Natural killer cell (primary cell): ENCODE measurements at regions of chr6 and their contacts with region 1.

Region 1: GRCh38 chr6:11496152-11497060 is 41.1 kb upstream of the TMEM170B start:
- DNase-seq: peak; percentile 48 to 90
- ATAC-seq: peak; percentile 95 to 99 (median 99)
- H3K4me3 ChIP-seq: no peak overlapping the region
- H3K4me3 Mint-ChIP-seq: no peak overlapping the region
- H3K27ac ChIP-seq: peak overlapping the region; percentile 2
- H3K27ac Mint-ChIP-seq: no peak overlapping the region
- H3K4me1 ChIP-seq: peaks cover 3% of the 10 kb centered on the region
- H3K4me1 Mint-ChIP-seq: no peaks in the 10 kb centered on the region
- H3K27me3 ChIP-seq: no peaks in the 10 kb centered on the region
- H3K27me3 Mint-ChIP-seq: no peaks in the 10 kb centered on the region
- CTCF ChIP-seq: peak; percentile 93

Region 2: DNA sequence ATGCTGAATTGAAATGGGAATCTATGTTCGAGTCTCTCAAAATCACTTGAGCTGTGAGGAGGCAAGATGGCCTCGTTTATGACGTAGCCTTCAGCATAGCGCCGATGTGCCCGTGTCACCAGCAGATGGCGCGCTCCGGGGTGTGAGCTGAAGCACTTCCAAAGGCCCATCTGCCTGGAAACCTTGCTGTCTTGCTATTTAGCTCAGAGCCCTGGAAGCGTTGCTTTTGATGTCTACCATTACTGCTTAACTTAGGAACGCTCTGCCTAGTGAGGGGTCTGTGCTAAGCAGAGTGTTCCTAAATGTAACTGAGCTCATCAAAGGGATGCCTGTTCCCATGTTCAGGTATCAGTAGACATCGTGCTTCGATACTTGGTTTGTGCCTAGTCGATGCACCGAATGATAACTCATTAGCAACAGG is 541.8 kb before region 1 on chr6:
- intact Hi-C with region 1: loop called (anchors 10 kb)
- DNase-seq: peak; percentile 44 to 66
- ATAC-seq: peak; percentile 52 to 75 (median 62)
- H3K4me3 ChIP-seq: no peak overlapping the region
- H3K4me3 Mint-ChIP-seq: no peak overlapping the region
- H3K27ac ChIP-seq: no peak overlapping the region
- H3K27ac Mint-ChIP-seq: no peak overlapping the region
- H3K4me1 ChIP-seq: no peaks in the 10 kb centered on the region
- H3K4me1 Mint-ChIP-seq: no peaks in the 10 kb centered on the region
- H3K27me3 ChIP-seq: peaks cover 3% of the 10 kb centered on the region
- H3K27me3 Mint-ChIP-seq: peaks cover 16 to 17% of the 10 kb centered on the region in 2 donors
- CTCF ChIP-seq: peak; percentile 44

Region 3: DNA sequence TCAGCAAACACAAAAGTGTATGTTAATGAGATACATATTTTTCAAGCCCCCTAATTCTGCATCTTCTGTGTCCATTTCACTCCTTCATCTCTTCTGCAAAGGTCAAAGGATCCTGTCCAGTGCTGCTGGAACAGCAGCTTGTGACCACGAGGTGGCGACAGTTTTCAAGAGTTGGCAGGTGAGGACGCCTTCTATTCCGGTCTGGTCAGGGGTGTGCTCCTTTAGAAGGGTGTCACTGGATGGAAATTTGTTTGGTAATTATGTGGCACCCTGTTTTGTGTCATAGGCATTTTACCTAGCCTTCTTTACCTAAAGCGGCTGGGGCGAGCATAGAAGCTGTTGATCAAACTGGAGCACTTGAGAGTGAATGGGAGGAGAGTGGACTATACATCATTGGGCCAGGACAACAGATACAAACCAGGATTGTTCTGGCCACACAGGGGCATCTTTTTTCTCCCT is 352.0 kb before region 1 on chr6:
- intact Hi-C with region 1: loop called (anchors 1 kb)
- DNase-seq: peak; percentile 63 to 86
- ATAC-seq: peak; percentile 82 to 97 (median 96)
- H3K4me3 ChIP-seq: no peak overlapping the region
- H3K4me3 Mint-ChIP-seq: no peak overlapping the region
- H3K27ac ChIP-seq: no peak overlapping the region
- H3K27ac Mint-ChIP-seq: no peak overlapping the region
- H3K4me1 ChIP-seq: peaks cover 3% of the 10 kb centered on the region
- H3K4me1 Mint-ChIP-seq: peaks cover 4 to 5% of the 10 kb centered on the region in 2 donors
- H3K27me3 ChIP-seq: no peaks in the 10 kb centered on the region
- H3K27me3 Mint-ChIP-seq: no peaks in the 10 kb centered on the region
- CTCF ChIP-seq: peak; percentile 86

Region 4: GRCh38 chr6:11172501-11173332 is 323.7 kb before region 1 on chr6:
- intact Hi-C with region 1: loop called (anchors 1 kb)
- DNase-seq: peak; percentile 76 to 86
- ATAC-seq: peak; percentile 75 to 89 (median 83)
- H3K4me3 ChIP-seq: no peak overlapping the region
- H3K4me3 Mint-ChIP-seq: peak overlapping the region; percentile 80
- H3K27ac ChIP-seq: no peak overlapping the region
- H3K27ac Mint-ChIP-seq: peak overlapping the region in 1 of 2 donors; percentile 75
- H3K4me1 ChIP-seq: peaks cover 6% of the 10 kb centered on the region
- H3K4me1 Mint-ChIP-seq: peaks cover 12 to 19% of the 10 kb centered on the region in 2 donors
- H3K27me3 ChIP-seq: no peaks in the 10 kb centered on the region
- H3K27me3 Mint-ChIP-seq: no peaks in the 10 kb centered on the region
- CTCF ChIP-seq: peak; percentile 89

Region 5: DNA sequence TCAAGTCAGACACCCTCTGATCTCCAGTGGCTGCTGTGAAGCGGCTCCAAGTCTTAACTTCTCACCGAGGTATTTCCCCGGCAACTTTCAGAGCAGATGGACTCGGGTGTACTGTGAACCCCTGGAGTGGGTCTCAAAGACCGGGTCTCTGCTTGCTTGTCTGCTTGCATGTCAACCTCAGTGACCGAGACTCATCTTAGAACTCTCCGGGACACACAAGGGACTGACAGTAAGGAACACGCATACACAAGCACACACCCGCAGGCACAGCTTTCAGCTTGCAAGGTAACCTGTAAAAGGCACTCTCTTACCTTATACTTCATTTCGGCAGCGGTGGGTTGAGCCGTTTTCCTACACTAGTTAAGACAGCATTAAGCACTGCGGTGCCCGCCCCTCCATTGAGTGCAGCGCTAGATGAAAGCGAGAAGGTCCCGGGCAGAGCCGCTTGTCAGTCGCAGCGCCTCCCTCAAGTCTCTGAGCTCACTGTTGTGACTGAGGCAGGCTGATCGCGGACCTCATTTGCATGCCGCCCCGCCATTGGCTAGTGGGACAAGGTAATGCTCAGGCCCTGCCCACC is 264.1 kb before region 1 on chr6 and contains the start of gene NEDD9:
- intact Hi-C with region 1: no loop called
- DNase-seq: peak; percentile 93 to 97
- ATAC-seq: peak; percentile 90 to 98 (median 94)
- H3K4me3 ChIP-seq: peak within 1 kb of the TSS; percentile 59
- H3K4me3 Mint-ChIP-seq: peak within 1 kb of the TSS; percentile 94
- H3K27ac ChIP-seq: peak within 1 kb of the TSS; percentile 95
- H3K27ac Mint-ChIP-seq: peak within 1 kb of the TSS; percentile 96 to 98
- H3K4me1 ChIP-seq: peaks cover 40% of the 10 kb centered on the region
- H3K4me1 Mint-ChIP-seq: peaks cover 82 to 88% of the 10 kb centered on the region in 2 donors
- H3K27me3 ChIP-seq: no peaks in the 10 kb centered on the region
- H3K27me3 Mint-ChIP-seq: no peaks in the 10 kb centered on the region
- CTCF ChIP-seq: no peak
- total RNA-seq, gene NEDD9: 106 to 110 (median 107) TPM

Region 6: GRCh38 chr6:11575408-11576033 is 79.1 kb after region 1 on chr6:
- intact Hi-C with region 1: loop called (anchors 1 kb)
- DNase-seq: peak in 1 of 2 donors; percentile 73
- ATAC-seq: peak; percentile 85 to 99 (median 90)
- H3K4me3 ChIP-seq: no peak overlapping the region
- H3K4me3 Mint-ChIP-seq: no peak overlapping the region
- H3K27ac ChIP-seq: no peak overlapping the region
- H3K27ac Mint-ChIP-seq: no peak overlapping the region
- H3K4me1 ChIP-seq: no peaks in the 10 kb centered on the region
- H3K4me1 Mint-ChIP-seq: no peaks in the 10 kb centered on the region
- H3K27me3 ChIP-seq: no peaks in the 10 kb centered on the region
- H3K27me3 Mint-ChIP-seq: no peaks in the 10 kb centered on the region
- CTCF ChIP-seq: peak; percentile 66